Astrocyte of the cerebellum (primary cell): ENCODE measurements at regions of chr11 and their contacts with region 1.

Region 1: GRCh38 chr11:17894929-17895658 is 117.8 kb downstream of the SERGEF start:
- DNase-seq: no peak
- H3K4me3 ChIP-seq: no peak overlapping the region
- CTCF ChIP-seq: no peak

Region 2: DNA sequence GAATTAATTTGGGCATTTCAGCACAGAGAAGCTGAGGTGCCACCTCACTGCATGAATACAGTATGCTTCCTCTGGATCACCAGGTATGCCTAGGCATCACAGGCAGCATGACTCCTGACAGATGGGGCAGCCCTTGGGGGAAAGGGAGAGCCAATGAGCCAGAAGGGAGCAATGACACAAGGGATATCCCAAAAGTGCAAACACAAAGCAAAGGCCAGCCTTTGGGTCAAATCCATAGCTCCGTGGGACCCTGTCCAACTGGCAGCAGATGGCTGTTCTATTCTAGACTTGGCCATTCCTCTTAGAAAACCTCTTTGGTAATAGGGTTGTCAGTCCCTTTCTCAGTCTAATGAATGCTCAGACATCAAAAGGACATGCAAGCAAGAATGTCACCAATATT is 44.4 kb after region 1 on chr11:
- in situ Hi-C with region 1: loop called (anchors 5 kb)
- DNase-seq: no peak
- H3K4me3 ChIP-seq: no peak overlapping the region
- CTCF ChIP-seq: no peak